ENCODE measurements at regions of chr16 and their contacts with region 1.

Region 1: DNA sequence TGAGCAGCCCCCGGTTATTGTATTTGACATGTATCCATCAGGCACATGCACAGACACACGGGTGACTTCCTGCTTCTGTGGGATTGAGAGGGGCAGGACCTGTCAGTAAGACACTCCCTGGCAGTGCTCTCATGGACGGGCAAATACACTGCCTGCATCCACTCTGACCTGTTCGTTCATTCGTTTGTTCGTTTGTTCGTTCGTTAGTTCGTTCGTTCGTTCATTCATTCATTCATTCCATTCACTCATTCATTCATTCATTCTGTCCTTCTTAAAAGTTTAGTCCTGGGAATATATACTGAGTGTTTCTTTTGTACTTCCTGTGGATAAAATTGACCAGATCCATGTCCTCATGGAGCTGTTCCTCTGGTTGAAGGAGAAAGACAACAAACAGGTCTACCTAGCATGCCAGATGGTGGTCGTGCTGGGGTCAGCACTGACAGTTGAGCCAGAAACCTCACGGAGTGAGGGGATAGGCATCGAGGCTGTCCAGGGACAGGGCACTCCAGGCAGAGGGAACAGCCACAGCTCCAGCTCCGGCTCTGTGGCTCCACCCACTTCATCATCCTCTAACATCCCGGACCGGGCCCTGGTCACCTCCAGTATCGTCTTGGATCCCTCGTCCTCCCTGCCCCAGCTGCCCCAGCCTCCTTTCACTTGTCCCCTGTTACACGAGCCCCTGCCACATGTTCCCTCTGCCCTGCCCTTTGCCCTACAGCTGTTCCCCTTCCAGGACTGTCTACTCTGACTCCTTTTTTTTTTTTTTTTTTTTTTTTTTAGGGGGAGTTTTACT is 336.1 kb downstream of the CPPED1 start:
- DNase-seq: no peak
- H3K4me3 ChIP-seq: no peak overlapping the region
- H3K4me3 Mint-ChIP-seq: no peak overlapping the region
- H3K27ac Mint-ChIP-seq: no peak overlapping the region
- H3K4me1 ChIP-seq: no peaks in the 10 kb centered on the region
- H3K4me1 Mint-ChIP-seq: no peaks in the 10 kb centered on the region
- H3K27me3 ChIP-seq: no peaks in the 10 kb centered on the region
- H3K27me3 Mint-ChIP-seq: no peaks in the 10 kb centered on the region
- CTCF ChIP-seq: no peak

Region 2: GRCh38 chr16:11245988-11246387 is 1221.6 kb before region 1 on chr16:
- CTCF ChIA-PET with region 1: interaction called, 11 read pairs
- POLR2A ChIA-PET with region 1: no interaction called
- intact Hi-C with region 1: no loop called
- DNase-seq: no peak
- H3K4me3 ChIP-seq: no peak overlapping the region
- H3K4me3 Mint-ChIP-seq: no peak overlapping the region
- H3K27ac Mint-ChIP-seq: no peak overlapping the region
- H3K4me1 ChIP-seq: no peaks in the 10 kb centered on the region
- H3K4me1 Mint-ChIP-seq: no peaks in the 10 kb centered on the region
- H3K27me3 ChIP-seq: no peaks in the 10 kb centered on the region
- H3K27me3 Mint-ChIP-seq: no peaks in the 10 kb centered on the region
- CTCF ChIP-seq: no peak

Region 3: GRCh38 chr16:12436201-12436657 is 31.4 kb before region 1 on chr16:
- CTCF ChIA-PET with region 1: no interaction called
- POLR2A ChIA-PET with region 1: no interaction called
- intact Hi-C with region 1: no loop called
- DNase-seq: no peak
- H3K4me3 ChIP-seq: no peak overlapping the region
- H3K4me3 Mint-ChIP-seq: no peak overlapping the region
- H3K27ac Mint-ChIP-seq: no peak overlapping the region
- H3K4me1 ChIP-seq: no peaks in the 10 kb centered on the region
- H3K4me1 Mint-ChIP-seq: no peaks in the 10 kb centered on the region
- H3K27me3 ChIP-seq: no peaks in the 10 kb centered on the region
- H3K27me3 Mint-ChIP-seq: no peaks in the 10 kb centered on the region
- CTCF ChIP-seq: no peak

Measured in Caco-2 (cell line).